ENCODE measurements at regions of chr10 and their contacts with region 1.

Region 1: DNA sequence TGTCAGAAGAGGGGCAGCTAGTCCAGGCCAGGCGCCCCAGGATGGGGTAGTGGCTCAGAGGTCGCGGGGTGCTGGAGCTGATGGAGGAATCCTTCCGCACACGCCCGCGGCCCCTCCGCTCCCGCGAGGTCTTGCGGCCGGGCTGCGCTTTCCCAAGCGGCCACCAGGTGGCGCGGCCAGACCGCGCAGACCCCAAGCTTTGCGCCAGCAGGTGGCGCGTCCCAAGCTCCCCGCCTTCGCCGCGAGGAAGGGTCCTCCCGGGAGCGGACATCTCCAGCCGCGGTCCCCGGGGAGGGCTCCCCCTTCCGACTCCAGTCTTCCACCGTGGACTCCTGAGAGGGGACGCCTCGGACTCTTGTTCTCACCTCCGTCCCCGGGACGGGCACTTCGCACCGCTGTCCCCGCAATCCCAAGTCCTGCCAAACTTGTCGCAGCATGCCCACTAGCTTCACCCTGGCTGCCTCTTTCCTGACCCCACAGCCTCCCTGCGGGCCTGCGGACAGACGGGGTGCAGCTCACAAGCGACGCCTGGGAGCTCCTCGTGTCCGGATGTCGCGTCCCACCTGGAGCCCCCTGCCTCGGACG is 19.4 kb downstream of the KCNK18 start:
- DNase-seq: peak; percentile 66 to 84
- ATAC-seq: peak; percentile 88 to 98 (median 91)
- H3K4me3 ChIP-seq: peak overlapping the region; percentile 55
- H3K27ac ChIP-seq: no peak overlapping the region
- H3K4me1 ChIP-seq: peaks cover 5% of the 10 kb centered on the region
- H3K27me3 ChIP-seq: peaks cover 0 to 51% (median 18%) of the 10 kb centered on the region in 3 donors
- CTCF ChIP-seq: peak; percentile 100

Region 2: DNA sequence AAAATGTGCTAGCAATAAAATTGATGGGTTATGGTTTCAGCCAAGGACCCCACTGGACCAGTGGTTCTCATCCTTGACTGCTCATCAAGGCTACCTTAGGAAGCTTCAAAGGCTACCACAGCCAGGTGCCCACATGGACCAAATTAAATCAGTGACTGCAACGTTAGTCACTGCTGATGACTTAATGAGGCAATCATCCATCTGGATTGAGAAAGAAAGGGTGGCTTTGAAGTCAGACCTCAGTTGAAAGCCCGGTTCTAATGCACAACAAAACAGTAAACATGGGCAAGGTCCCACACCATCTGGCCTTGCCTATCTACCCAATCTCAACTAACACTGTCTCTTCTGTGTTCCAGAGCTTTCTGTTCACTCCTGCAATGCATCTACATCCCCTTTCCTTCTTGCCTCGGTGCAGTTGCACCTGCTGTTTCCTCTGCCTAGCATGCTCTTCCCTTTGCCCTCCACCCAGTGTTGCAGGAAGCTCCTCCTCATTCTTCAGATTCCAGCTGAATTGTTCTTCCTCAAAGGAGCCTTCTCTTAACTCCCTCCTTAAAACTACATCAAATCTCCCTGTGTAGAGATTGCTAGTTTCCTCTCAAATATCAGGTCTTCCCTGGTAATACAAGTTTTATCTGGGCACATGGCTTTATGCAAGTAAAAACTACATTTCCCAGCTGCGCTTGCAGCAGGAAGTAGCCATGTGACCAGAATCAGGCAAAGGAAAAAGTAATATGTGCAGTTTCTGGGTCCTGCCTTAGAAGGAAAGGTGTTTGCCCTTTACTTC is 29.7 kb before region 1 on chr10:
- intact Hi-C with region 1: no loop called
- DNase-seq: no peak
- ATAC-seq: no peak
- H3K4me3 ChIP-seq: no peak overlapping the region
- H3K27ac ChIP-seq: no peak overlapping the region
- H3K4me1 ChIP-seq: no peaks in the 10 kb centered on the region
- H3K27me3 ChIP-seq: no peaks in the 10 kb centered on the region
- CTCF ChIP-seq: no peak

Region 3: GRCh38 chr10:117320050-117320665 is 103.5 kb after region 1 on chr10:
- intact Hi-C with region 1: loop called (anchors 2 to 5 kb)
- DNase-seq: no peak
- ATAC-seq: peak in 1 of 4 donors; percentile 56
- H3K4me3 ChIP-seq: no peak overlapping the region
- H3K27ac ChIP-seq: no peak overlapping the region
- H3K4me1 ChIP-seq: no peaks in the 10 kb centered on the region
- H3K27me3 ChIP-seq: no peaks in the 10 kb centered on the region
- CTCF ChIP-seq: peak; percentile 45

Region 4: GRCh38 chr10:117442944-117443685 is 226.4 kb after region 1 on chr10:
- intact Hi-C with region 1: loop called in 1 of 2 experiments (anchors 10 kb)
- DNase-seq: peak; percentile 80 to 90
- ATAC-seq: peak; percentile 73 to 83 (median 80)
- H3K4me3 ChIP-seq: peak overlapping the region; percentile 37
- H3K27ac ChIP-seq: no peak overlapping the region
- H3K4me1 ChIP-seq: no peaks in the 10 kb centered on the region
- H3K27me3 ChIP-seq: peaks cover 0 to 6% (median 3%) of the 10 kb centered on the region in 3 donors
- CTCF ChIP-seq: peak; percentile 77

Measured in psoas muscle (tissue), 8 donors.